Activated B cell treated with CpG ODN at 0.5 μM for 24 hours (primary cell): ENCODE measurements at regions of chr19 and their contacts with region 1.

Region 1: DNA sequence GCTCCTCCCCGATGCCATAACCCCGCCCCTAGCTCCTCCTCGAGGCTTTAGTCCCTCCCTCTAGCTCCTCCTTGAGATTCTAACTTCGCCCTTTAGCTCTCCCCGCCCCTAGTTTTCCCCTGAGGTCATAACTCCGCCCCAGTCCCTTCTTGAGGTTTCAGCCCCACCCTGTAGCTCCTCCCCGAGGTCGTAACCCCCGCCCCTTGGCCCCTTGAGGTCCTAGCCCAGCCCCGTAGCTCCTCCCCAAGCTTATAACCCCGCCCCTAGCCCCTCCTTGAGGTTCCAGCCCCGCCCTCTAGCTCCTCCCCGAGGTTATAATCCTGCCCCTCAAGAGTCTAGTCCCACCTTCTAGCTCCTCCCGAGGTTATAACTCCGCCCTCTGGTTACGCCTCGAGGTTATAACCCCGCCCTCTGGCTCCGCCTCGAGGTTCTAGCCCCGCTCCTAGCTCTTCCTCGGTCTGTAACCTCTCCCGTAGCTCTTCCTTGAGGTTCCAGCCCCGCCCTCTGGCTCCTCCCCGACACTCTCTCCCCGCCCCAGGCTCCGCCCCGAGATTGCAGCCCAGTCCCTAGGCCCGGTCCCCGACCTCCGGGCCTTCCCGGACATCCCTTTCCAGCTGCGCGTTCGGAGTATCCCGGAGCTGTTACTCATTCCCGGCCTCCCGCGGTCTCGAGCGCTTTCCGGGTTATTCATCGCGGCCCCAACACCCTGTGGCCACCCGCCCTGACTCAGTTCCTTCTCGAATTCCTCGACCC is 1.4 kb downstream of the PLAUR start:
- DNase-seq: peak; percentile 76
- ATAC-seq: peak; percentile 88
- H3K4me3 Mint-ChIP-seq: peak overlapping the region; percentile 80
- H3K27ac Mint-ChIP-seq: peak overlapping the region; percentile 24
- H3K4me1 Mint-ChIP-seq: peaks cover 44% of the 10 kb centered on the region
- H3K27me3 Mint-ChIP-seq: peaks cover 9% of the 10 kb centered on the region
- CTCF ChIP-seq: no peak

Region 2: GRCh38 chr19:43532962-43533545 is 135.5 kb before region 1 on chr19 and contains the start of gene ZNF575:
- CTCF ChIA-PET with region 1: interaction called, 4 read pairs
- POLR2A ChIA-PET with region 1: interaction called, 5 read pairs
- intact Hi-C with region 1: loop called (anchors 1 kb)
- DNase-seq: peak; percentile 77
- ATAC-seq: peak; percentile 45
- H3K4me3 Mint-ChIP-seq: peak within 1 kb of the TSS; percentile 97
- H3K27ac Mint-ChIP-seq: peak within 1 kb of the TSS; percentile 98
- H3K4me1 Mint-ChIP-seq: peaks cover 19% of the 10 kb centered on the region
- H3K27me3 Mint-ChIP-seq: no peaks in the 10 kb centered on the region
- CTCF ChIP-seq: no peak
- total RNA-seq, gene ZNF575: 1.9 and 3.4 TPM in 2 replicates

Region 3: DNA sequence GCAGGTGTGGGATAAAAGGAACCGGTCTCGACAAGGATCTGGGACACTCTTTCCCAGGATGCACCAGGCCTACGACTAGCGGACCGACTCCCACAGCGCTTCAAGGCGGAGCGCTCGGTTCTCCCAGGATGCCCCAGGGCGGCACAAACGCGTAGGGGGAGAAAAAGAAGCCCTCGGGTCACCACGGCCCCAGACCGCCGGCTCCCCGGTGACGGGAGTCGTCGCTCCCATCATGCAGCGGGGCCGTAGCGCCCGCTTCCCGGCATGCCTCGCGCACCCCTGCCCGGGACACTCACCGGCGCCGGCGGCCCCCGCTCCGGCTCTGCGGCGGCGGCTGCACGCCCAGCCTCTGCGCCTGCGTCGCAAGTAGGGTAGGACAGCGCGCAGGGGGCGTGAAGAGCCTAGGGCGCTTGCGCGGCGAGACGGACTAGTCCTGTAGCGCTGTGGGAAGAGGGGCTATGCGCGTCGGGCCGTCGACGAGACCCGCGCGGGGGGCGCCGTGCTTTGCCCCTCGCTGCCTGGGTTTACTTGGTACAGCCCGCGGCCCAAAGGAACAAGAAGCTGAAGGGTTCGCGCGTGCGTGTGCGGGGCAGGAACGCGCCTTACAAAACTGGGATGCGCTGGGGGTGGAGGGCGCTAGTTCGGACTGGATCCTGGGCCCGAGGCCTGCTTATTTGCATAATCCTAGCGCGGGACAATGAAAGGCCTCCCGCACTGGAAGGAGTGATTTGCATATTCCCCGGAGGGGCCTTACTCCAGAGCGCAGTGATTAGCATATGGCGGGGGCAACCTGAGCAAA is 49.1 kb before region 1 on chr19 and contains the start of gene ZNF428:
- CTCF ChIA-PET with region 1: no interaction called
- POLR2A ChIA-PET with region 1: interaction called, 3 read pairs
- intact Hi-C with region 1: loop called (anchors 1 kb)
- DNase-seq: peak; percentile 83
- ATAC-seq: peak; percentile 87
- H3K4me3 Mint-ChIP-seq: peak within 1 kb of the TSS; percentile 94
- H3K27ac Mint-ChIP-seq: peak within 1 kb of the TSS; percentile 96
- H3K4me1 Mint-ChIP-seq: peaks cover 21% of the 10 kb centered on the region
- H3K27me3 Mint-ChIP-seq: no peaks in the 10 kb centered on the region
- CTCF ChIP-seq: no peak
- total RNA-seq, gene ZNF428: 26.2 and 29.1 TPM in 2 replicates

Region 4: GRCh38 chr19:43639519-43640423 is 28.8 kb before region 1 on chr19 and contains the start of gene CADM4:
- CTCF ChIA-PET with region 1: no interaction called
- POLR2A ChIA-PET with region 1: no interaction called
- intact Hi-C with region 1: loop called (anchors 5 kb)
- DNase-seq: peak; percentile 49
- ATAC-seq: peak; percentile 85
- H3K4me3 Mint-ChIP-seq: peak within 1 kb of the TSS; percentile 80
- H3K27ac Mint-ChIP-seq: no peak within 1 kb of the TSS
- H3K4me1 Mint-ChIP-seq: peaks cover 23% of the 10 kb centered on the region
- H3K27me3 Mint-ChIP-seq: peaks cover 34% of the 10 kb centered on the region
- CTCF ChIP-seq: no peak
- total RNA-seq, gene CADM4: 0.95 TPM in 1 of 2 replicates, not detected in the other

Region 5: GRCh38 chr19:43700395-43701000 is 31.9 kb after region 1 on chr19:
- CTCF ChIA-PET with region 1: interaction called, 3 read pairs
- POLR2A ChIA-PET with region 1: interaction called, 4 read pairs
- intact Hi-C with region 1: loop called (anchors 1 kb)
- DNase-seq: peak; percentile 21
- ATAC-seq: peak; percentile 30
- H3K4me3 Mint-ChIP-seq: peak overlapping the region; percentile 85
- H3K27ac Mint-ChIP-seq: peak overlapping the region; percentile 90
- H3K4me1 Mint-ChIP-seq: peaks cover 30% of the 10 kb centered on the region
- H3K27me3 Mint-ChIP-seq: peaks cover 9% of the 10 kb centered on the region
- CTCF ChIP-seq: no peak

Region 6: DNA sequence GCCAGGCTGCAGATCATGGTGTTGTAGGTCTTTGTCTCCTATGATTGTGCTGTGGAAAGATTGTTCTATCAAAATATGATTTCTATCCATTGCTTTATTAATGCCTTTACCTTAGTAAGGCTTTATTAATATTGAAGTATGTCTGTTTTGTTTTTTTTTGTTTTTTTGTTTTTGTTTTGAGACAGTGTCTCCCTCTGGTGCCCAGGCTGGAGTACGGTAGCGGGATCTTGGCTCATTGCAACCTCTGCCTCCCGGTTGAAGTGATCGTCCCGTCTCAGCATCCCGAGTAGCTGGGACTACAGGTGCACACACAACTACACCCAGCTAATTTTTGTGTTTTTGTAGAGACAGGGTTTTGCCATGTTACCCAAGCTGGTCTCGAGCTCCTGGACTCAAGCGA is 55.0 kb after region 1 on chr19:
- CTCF ChIA-PET with region 1: interaction called, 4 read pairs
- POLR2A ChIA-PET with region 1: interaction called, 16 read pairs
- intact Hi-C with region 1: loop called (anchors 10 kb)
- DNase-seq: no peak
- ATAC-seq: no peak
- H3K4me3 Mint-ChIP-seq: no peak overlapping the region
- H3K27ac Mint-ChIP-seq: no peak overlapping the region
- H3K4me1 Mint-ChIP-seq: peaks cover 40% of the 10 kb centered on the region
- H3K27me3 Mint-ChIP-seq: no peaks in the 10 kb centered on the region
- CTCF ChIP-seq: no peak

Region 7: GRCh38 chr19:43765109-43765876 is 96.7 kb after region 1 on chr19:
- CTCF ChIA-PET with region 1: no interaction called
- POLR2A ChIA-PET with region 1: interaction called, 14 read pairs
- intact Hi-C with region 1: no loop called
- DNase-seq: peak; percentile 55
- ATAC-seq: peak; percentile 84
- H3K4me3 Mint-ChIP-seq: peak overlapping the region; percentile 76
- H3K27ac Mint-ChIP-seq: peak overlapping the region; percentile 94
- H3K4me1 Mint-ChIP-seq: peaks cover 68% of the 10 kb centered on the region
- H3K27me3 Mint-ChIP-seq: no peaks in the 10 kb centered on the region
- CTCF ChIP-seq: no peak

Region 8: GRCh38 chr19:43895727-43896126 is 227.1 kb after region 1 on chr19:
- CTCF ChIA-PET with region 1: no interaction called
- POLR2A ChIA-PET with region 1: no interaction called
- intact Hi-C with region 1: no loop called
- DNase-seq: no peak
- ATAC-seq: no peak
- H3K4me3 Mint-ChIP-seq: no peak overlapping the region
- H3K27ac Mint-ChIP-seq: no peak overlapping the region
- H3K4me1 Mint-ChIP-seq: peaks cover 3% of the 10 kb centered on the region
- H3K27me3 Mint-ChIP-seq: no peaks in the 10 kb centered on the region
- CTCF ChIP-seq: no peak